ENCODE measurements at regions of chr14 and their contacts with region 1.

Region 1: GRCh38 chr14:24114536-24115450 is at the starts of genes DCAF11 and NRL:
- DNase-seq: peak; percentile 98
- H3K4me3 Mint-ChIP-seq: peak within 1 kb of the TSS; percentile 98
- H3K27ac Mint-ChIP-seq: peak within 1 kb of the TSS; percentile 100
- H3K4me1 Mint-ChIP-seq: peaks cover 42% of the 10 kb centered on the region
- H3K27me3 Mint-ChIP-seq: no peaks in the 10 kb centered on the region
- total RNA-seq, gene DCAF11: 94.1 to 98.2 TPM
- total RNA-seq, gene NRL: 2.1 to 2.4 TPM

Region 2: GRCh38 chr14:24080888-24081738 is 33.7 kb before region 1 on chr14:
- CTCF ChIA-PET with region 1: interaction called, 4 read pairs
- POLR2A ChIA-PET with region 1: interaction called, 26 read pairs
- DNase-seq: peak; percentile 83
- H3K4me3 Mint-ChIP-seq: peak overlapping the region; percentile 74
- H3K27ac Mint-ChIP-seq: peak overlapping the region; percentile 75
- H3K4me1 Mint-ChIP-seq: peaks cover 32% of the 10 kb centered on the region
- H3K27me3 Mint-ChIP-seq: peaks cover 11% of the 10 kb centered on the region

Region 3: DNA sequence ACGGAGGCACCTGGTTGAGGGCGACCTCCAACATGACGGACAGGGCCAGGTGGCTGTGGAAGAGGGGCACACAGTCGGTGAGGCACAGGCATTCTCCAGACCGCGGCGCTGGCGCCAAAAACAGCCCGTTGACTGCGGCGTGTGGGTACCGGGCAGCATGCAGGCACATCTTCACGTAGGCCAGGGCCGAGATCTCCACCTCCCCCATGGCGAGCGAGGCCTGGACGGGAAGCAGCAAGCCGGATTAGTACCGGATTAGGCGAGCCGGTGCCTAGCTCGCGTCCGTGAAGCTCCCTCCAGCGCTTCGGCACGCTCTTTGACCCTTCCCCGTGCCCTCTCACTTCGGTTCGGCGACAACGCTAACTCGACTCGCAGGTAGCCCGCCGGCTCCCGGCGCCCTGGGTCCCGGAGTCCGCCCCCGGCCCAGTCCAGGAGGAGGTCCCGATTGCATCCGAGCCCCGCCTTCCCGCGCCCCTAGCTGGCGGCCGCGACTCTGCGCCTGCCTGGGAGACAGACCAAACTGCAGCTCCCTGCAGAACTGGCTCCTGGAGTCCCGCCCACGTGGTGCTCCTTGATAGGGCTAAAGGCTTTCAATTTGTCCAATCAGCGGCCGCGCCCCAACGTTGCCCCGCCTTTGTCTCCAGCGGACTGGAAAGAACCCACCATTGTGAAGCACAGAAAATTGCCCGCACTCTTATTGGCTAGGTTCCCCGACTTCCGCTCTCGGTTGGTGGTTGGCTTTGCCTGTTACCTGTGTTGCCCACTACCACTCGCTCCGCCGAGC is 26.5 kb after region 1 on chr14 and contains the start of gene EMC9:
- CTCF ChIA-PET with region 1: interaction called, 24 read pairs
- POLR2A ChIA-PET with region 1: interaction called, 448 read pairs
- DNase-seq: peak; percentile 100
- H3K4me3 Mint-ChIP-seq: peak within 1 kb of the TSS; percentile 93
- H3K27ac Mint-ChIP-seq: peak within 1 kb of the TSS; percentile 92
- H3K4me1 Mint-ChIP-seq: peaks cover 73% of the 10 kb centered on the region
- H3K27me3 Mint-ChIP-seq: no peaks in the 10 kb centered on the region
- total RNA-seq, gene EMC9: 45.0 to 51.7 TPM

Region 4: GRCh38 chr14:24195191-24196070 is 80.6 kb after region 1 on chr14 and contains the start of gene TM9SF1:
- CTCF ChIA-PET with region 1: no interaction called
- POLR2A ChIA-PET with region 1: interaction called, 25 read pairs
- DNase-seq: peak; percentile 90
- H3K4me3 Mint-ChIP-seq: peak within 1 kb of the TSS; percentile 96
- H3K27ac Mint-ChIP-seq: peak within 1 kb of the TSS; percentile 95
- H3K4me1 Mint-ChIP-seq: peaks cover 64% of the 10 kb centered on the region
- H3K27me3 Mint-ChIP-seq: no peaks in the 10 kb centered on the region
- total RNA-seq, gene TM9SF1: 30.8 to 35.1 TPM

Region 5: DNA sequence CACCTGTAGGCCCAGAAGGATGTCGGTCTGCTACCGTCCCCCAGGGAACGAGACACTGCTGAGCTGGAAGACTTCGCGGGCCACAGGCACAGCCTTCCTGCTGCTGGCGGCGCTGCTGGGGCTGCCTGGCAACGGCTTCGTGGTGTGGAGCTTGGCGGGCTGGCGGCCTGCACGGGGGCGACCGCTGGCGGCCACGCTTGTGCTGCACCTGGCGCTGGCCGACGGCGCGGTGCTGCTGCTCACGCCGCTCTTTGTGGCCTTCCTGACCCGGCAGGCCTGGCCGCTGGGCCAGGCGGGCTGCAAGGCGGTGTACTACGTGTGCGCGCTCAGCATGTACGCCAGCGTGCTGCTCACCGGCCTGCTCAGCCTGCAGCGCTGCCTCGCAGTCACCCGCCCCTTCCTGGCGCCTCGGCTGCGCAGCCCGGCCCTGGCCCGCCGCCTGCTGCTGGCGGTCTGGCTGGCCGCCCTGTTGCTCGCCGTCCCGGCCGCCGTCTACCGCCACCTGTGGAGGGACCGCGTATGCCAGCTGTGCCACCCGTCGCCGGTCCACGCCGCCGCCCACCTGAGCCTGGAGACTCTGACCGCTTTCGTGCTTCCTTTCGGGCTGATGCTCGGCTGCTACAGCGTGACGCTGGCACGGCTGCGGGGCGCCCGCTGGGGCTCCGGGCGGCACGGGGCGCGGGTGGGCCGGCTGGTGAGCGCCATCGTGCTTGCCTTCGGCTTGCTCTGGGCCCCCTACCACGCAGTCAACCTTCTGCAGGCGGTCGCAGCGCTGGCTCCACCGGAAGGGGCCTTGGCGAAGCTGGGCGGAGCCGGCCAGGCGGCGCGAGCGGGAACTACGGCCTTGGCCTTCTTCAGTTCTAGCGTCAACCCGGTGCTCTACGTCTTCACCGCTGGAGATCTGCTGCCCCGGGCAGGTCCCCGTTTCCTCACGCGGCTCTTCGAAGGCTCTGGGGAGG is 196.1 kb after region 1 on chr14 and contains the start of gene LTB4R:
- CTCF ChIA-PET with region 1: interaction called, 12 read pairs
- POLR2A ChIA-PET with region 1: interaction called, 5 read pairs
- DNase-seq: peak; percentile 76
- H3K4me3 Mint-ChIP-seq: peak within 1 kb of the TSS; percentile 87
- H3K27ac Mint-ChIP-seq: peak within 1 kb of the TSS; percentile 96
- H3K4me1 Mint-ChIP-seq: peaks cover 75% of the 10 kb centered on the region
- H3K27me3 Mint-ChIP-seq: no peaks in the 10 kb centered on the region
- total RNA-seq, gene LTB4R: 36.1 to 37.9 TPM

Measured in activated CD4-positive, alpha-beta memory T cell treated with anti-CD3 and anti-CD28 coated beads, Interleukin-2, amount 10 ng/mL, durations not matched to agents 7 days and 5 days (primary cell).